ENCODE measurements at regions of chr20 and their contacts with region 1.

Region 1: DNA sequence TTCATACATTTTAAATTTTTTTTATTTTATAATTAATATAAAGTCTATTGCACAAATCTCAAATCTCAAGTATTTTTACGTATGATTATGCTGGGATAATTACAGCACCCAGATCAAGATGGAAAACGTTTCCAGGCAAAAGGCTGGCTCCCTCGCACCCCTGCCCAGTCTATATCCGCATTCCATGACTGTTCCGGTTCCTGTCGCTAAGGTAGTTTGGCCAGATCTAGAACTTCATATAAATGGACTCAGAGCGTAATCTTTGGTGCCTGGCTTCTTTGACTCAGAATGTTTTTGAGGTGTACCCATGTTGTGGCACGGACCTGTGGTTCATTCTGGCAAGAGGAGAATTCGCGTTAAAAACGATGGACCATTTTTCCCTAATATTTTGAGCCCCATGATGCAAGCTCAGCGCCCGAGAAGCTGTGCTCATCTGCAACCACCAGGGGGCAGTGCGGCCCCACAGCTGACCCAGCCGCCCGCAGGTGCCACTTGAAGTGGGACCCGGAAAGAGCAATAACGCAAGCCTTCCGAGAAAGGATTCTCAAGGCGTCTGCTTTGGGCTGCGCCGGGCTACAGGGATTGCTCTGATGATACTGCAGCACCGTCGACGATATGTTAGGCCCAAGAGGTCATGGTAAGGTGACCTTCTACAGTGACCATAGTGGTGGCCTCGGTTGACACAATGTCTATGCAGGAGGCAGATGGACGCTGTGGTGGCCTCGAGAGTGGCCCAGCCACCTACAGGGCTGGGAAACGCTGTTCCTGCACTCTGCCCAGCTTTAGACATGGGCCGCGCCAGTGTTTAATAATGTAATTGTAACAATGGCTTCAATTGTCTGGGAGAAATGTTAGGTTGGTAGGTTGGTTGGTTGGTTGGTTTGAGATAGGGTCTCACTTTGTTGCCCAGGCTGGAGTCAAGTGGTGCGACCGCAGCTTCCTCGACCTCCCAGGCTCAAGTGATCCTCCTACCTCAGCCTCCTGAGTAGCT is 160.1 kb downstream of the ZMYND8 start:
- DNase-seq: peak; percentile 57 to 82 (median 70)
- H3K4me3 ChIP-seq: peak overlapping the region in 34 of 59 donors; percentile 1 to 45 (median 18)
- H3K27ac ChIP-seq: no peak overlapping the region
- H3K27me3 ChIP-seq: no peaks in the 10 kb centered on the region
- CTCF ChIP-seq: peak; percentile 81 to 99 (median 97)

Region 2: GRCh38 chr20:47097691-47098622 is 98.4 kb before region 1 on chr20:
- intact Hi-C with region 1: no loop called
- DNase-seq: no peak
- H3K4me3 ChIP-seq: no peak overlapping the region
- H3K27ac ChIP-seq: no peak overlapping the region
- H3K27me3 ChIP-seq: peaks cover 0 to 14% (median 0%) of the 10 kb centered on the region in 45 donors
- CTCF ChIP-seq: no peak

Region 3: DNA sequence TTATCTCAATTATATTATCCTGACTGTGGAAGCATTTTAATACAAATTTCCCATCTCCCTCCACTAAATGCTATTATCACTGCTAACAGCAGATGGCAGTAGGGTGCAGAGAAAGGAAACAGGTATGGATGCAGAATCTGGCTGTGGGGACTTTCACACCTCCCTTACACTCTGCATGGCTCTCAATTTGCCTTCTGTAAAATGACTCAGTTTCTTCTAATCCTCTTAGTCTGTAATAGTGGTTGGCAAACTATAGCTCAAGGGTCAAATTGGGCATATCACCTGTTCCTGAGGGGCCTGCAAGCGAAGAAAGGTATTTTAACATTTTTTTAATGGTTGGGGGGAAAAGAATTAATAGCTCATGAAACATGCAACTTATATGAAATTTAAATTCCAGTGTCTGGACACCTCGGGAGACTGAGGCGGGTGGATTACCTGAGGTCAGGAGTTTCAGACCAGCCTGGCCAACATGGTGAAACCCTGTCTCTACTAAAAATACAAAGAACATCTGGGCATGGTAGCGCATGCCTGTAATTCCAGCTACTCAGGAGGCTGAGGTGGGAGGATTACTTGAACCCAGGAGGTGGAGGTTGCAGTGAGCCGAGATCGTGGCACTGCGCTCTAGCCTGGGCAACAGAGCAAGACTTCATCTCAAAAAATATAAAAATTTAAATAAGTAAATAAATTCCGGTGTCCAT is 76.7 kb after region 1 on chr20:
- intact Hi-C with region 1: loop called in 1 of 2 experiments (anchors 5 kb)
- DNase-seq: peak in 2 of 10 donors; percentile 51 to 52
- H3K4me3 ChIP-seq: no peak overlapping the region
- H3K27ac ChIP-seq: peak overlapping the region in 54 of 59 donors; percentile 1 to 91 (median 80)
- H3K27me3 ChIP-seq: no peaks in the 10 kb centered on the region
- CTCF ChIP-seq: peak; percentile 70 to 99 (median 94)

Region 4: GRCh38 chr20:47379433-47380150 is 183.2 kb after region 1 on chr20:
- intact Hi-C with region 1: loop called (anchors 1 to 2 kb)
- DNase-seq: peak in 2 of 10 donors; percentile 38 to 58
- H3K4me3 ChIP-seq: no peak overlapping the region
- H3K27ac ChIP-seq: peak overlapping the region in 1 of 59 donors; percentile 31
- H3K27me3 ChIP-seq: no peaks in the 10 kb centered on the region
- CTCF ChIP-seq: no peak

Region 5: GRCh38 chr20:47389867-47390347 is 193.5 kb after region 1 on chr20:
- intact Hi-C with region 1: loop called in 1 of 2 experiments (anchors 2 kb)
- DNase-seq: peak in 1 of 10 donors; percentile 54
- H3K4me3 ChIP-seq: no peak overlapping the region
- H3K27ac ChIP-seq: no peak overlapping the region
- H3K27me3 ChIP-seq: no peaks in the 10 kb centered on the region
- CTCF ChIP-seq: no peak

Region 6: GRCh38 chr20:47493175-47493962 is 297.0 kb after region 1 on chr20:
- intact Hi-C with region 1: loop called in 1 of 2 experiments (anchors 10 kb)
- DNase-seq: peak in 5 of 10 donors; percentile 27 to 54 (median 33)
- H3K4me3 ChIP-seq: peak overlapping the region in 1 of 59 donors; percentile 7
- H3K27ac ChIP-seq: peak overlapping the region in 14 of 59 donors; percentile 3 to 72 (median 30)
- H3K27me3 ChIP-seq: no peaks in the 10 kb centered on the region
- CTCF ChIP-seq: no peak

Region 7: DNA sequence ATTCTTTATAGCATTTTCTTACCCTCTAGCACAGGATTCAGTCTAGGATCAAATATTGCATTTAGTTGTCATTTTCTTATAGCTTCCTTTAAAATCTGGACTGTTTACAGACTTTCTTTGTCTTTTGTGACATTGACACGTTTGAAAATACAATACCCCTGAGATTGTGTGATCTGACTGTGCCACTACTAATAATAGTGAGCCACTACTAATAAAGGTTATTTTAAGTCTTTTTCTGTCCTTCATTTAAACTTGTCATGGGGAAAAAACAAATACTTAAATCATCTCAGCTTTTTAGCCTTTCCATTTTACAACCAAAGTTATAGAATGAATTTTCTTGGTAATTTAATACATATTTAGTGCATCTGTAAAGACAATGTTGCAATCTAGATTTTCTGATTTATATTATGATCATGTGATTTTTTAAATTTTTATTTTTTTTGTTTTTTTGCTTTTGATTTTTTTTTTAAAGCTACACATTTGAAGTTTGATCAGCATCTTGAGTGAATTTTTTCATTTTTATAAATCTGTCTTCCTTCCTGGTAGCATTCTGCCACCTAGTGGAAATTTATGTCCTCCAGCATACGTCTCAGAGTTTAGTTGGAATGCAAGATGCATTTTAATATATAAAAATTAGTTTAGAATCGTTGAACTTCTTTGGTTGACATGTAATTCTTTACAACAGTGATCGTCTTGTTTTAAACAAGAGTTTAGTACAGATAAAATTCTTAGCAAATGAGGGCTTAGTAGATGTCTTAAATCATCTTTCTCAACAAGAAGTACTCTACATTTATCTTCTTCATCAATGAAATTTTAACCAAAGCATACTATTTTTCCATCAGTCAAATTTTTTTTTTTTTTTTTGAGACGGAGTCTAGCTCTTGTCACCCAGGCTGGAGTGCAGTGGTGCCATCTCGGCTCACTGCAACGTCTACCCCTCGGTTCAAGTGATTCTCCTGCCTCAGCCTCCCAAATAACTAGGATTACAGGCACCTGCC is 424.7 kb after region 1 on chr20:
- intact Hi-C with region 1: loop called (anchors 2 kb)
- DNase-seq: no peak
- H3K4me3 ChIP-seq: no peak overlapping the region
- H3K27ac ChIP-seq: no peak overlapping the region
- H3K27me3 ChIP-seq: no peaks in the 10 kb centered on the region
- CTCF ChIP-seq: peak; percentile 73 to 96 (median 87)

Measured in dorsolateral prefrontal cortex (tissue), 120 donors.